Panc1 (cell line): ENCODE measurements at regions of chr15 and their contacts with region 1.

Region 1: GRCh38 chr15:65028921-65029735 is at the start of gene MTFMT:
- DNase-seq: no peak
- ATAC-seq: peak; percentile 94
- H3K4me3 ChIP-seq: peak within 1 kb of the TSS; percentile 79 to 83
- H3K27ac ChIP-seq: peak within 1 kb of the TSS; percentile 83
- H3K4me1 ChIP-seq: peaks cover 15% of the 10 kb centered on the region
- H3K27me3 ChIP-seq: no peaks in the 10 kb centered on the region
- CTCF ChIP-seq: 0 out of 2 replicates have a peak, but pooled peaks have one; percentile 15
- total RNA-seq, gene MTFMT: 19.4 TPM

Region 2: DNA sequence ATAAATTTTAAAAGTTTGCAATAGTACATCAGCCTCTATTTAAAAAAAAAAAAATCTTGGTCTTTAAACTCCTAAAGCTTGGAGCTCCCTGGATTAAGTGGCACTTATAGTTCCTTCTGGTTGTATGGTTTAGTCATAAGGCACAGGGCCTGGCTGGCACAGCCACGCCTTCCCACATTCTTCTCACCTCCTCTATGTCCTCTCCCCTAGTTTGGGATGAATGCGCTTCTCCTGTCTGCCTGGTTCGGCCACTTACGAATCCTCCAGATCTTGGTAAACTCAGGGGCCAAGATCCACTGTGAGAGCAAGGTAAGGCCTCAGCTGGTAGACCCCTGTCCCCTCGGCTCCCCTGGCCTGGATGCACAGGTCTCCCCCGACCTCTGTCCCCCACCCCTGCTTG is 107.4 kb before region 1 on chr15:
- CTCF ChIA-PET with region 1: no interaction called
- POLR2A ChIA-PET with region 1: interaction called, 13 read pairs
- in situ Hi-C with region 1: no loop called
- intact Hi-C with region 1: no loop called
- DNase-seq: no peak
- ATAC-seq: no peak
- H3K4me3 ChIP-seq: no peak overlapping the region
- H3K27ac ChIP-seq: no peak overlapping the region
- H3K4me1 ChIP-seq: no peaks in the 10 kb centered on the region
- H3K27me3 ChIP-seq: no peaks in the 10 kb centered on the region
- CTCF ChIP-seq: no peak

Region 3: DNA sequence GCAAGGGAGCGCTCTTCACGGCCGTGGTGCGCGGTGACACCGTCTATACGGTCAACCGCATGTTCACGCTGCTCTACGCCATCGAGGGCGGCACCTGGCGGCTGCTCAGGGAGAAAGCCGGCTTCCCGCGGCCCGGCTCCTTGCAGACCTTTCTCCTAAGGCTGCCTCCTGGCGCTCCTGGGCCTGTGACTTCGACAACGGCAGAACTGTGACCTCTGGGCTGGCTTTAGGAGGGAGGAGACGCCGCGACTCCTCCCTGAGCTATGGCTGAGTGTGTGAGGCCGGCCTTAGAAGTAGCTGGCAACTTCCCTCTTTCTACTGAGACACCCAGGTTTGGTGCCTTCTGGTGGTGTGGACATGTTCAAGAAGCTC is 48.8 kb after region 1 on chr15:
- CTCF ChIA-PET with region 1: interaction called, 24 read pairs
- POLR2A ChIA-PET with region 1: no interaction called
- in situ Hi-C with region 1: no loop called
- intact Hi-C with region 1: loop called (anchors 2 kb)
- DNase-seq: no peak
- ATAC-seq: peak; percentile 96
- H3K4me3 ChIP-seq: no peak overlapping the region
- H3K27ac ChIP-seq: no peak overlapping the region
- H3K4me1 ChIP-seq: no peaks in the 10 kb centered on the region; the same call in 1 of the 2 replicates
- H3K27me3 ChIP-seq: no peaks in the 10 kb centered on the region; the same call in 1 of the 2 replicates
- CTCF ChIP-seq: peak; percentile 87

Region 4: DNA sequence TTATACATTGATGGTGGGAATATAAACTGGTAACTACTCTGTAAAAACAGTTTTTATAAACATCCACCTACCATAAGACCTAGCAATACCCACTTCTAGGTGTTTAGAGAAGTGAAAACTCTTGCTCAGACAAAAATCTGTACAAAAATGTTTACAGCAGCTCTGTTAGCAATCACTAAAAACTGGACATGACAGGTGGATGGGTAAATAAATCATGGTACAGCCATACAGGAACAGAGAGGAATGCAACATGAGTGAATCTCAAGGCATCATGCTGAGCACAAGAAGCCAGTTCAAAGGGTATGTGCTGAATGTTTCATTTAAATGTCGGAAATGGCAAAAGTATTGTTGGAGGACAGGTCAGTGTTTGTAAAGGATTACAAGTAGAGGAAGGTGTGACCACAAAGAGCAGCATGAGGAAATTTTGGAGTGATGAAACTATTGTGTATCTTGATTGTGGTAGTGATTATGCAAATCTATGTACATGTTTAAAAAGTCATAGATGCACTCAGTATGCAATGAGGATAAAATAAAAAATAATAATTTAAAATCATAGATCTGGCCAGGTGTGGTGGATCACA is 263.9 kb after region 1 on chr15:
- CTCF ChIA-PET with region 1: no interaction called
- POLR2A ChIA-PET with region 1: no interaction called
- in situ Hi-C with region 1: no loop called
- intact Hi-C with region 1: loop called (anchors 10 kb)
- DNase-seq: no peak
- ATAC-seq: no peak
- H3K4me3 ChIP-seq: no peak overlapping the region
- H3K27ac ChIP-seq: no peak overlapping the region
- H3K4me1 ChIP-seq: peaks cover 3% of the 10 kb centered on the region; the same call in 1 of the 2 replicates
- H3K27me3 ChIP-seq: no peaks in the 10 kb centered on the region
- CTCF ChIP-seq: no peak

Region 5: DNA sequence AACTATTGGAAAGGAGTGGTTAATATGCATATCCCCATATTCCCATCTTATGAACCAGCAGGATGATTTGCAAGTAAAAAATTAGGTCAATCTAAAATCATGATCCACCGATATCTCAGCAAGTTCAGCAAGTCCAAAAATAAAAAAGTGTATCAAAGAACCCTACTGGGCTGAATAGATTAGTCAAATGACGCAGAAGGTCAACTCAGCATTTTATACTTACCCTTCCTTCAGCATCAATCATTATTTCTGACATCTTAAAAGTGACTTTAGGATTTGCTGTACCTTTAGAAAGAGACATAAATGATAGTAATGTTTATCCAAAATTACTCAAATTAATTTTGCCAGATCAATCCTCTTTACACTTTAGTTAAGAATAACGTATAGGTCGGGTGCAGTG is 455.7 kb after region 1 on chr15:
- CTCF ChIA-PET with region 1: no interaction called
- POLR2A ChIA-PET with region 1: no interaction called
- in situ Hi-C with region 1: no loop called
- intact Hi-C with region 1: no loop called
- DNase-seq: no peak
- ATAC-seq: no peak
- H3K4me3 ChIP-seq: no peak overlapping the region
- H3K27ac ChIP-seq: no peak overlapping the region
- H3K4me1 ChIP-seq: no peaks in the 10 kb centered on the region
- H3K27me3 ChIP-seq: no peaks in the 10 kb centered on the region
- CTCF ChIP-seq: no peak